Aorta (tissue), 5 donors: ENCODE measurements at regions of chr4 and their contacts with region 1.

Region 1: GRCh38 chr4:8403173-8403753 is 37.3 kb downstream of the ACOX3 start:
- DNase-seq: peak; percentile 91 to 96
- ATAC-seq: peak; percentile 90
- H3K4me3 ChIP-seq: no peak overlapping the region
- H3K27ac ChIP-seq: no peak overlapping the region
- H3K4me1 ChIP-seq: no peaks in the 10 kb centered on the region
- H3K27me3 ChIP-seq: no peaks in the 10 kb centered on the region

Region 2: GRCh38 chr4:8079031-8079885 is 324.0 kb before region 1 on chr4:
- intact Hi-C with region 1: no loop called
- DNase-seq: peak in 1 of 2 donors; percentile 56
- ATAC-seq: no peak
- H3K4me3 ChIP-seq: no peak overlapping the region
- H3K27ac ChIP-seq: no peak overlapping the region
- H3K4me1 ChIP-seq: no peaks in the 10 kb centered on the region
- H3K27me3 ChIP-seq: no peaks in the 10 kb centered on the region

Region 3: DNA sequence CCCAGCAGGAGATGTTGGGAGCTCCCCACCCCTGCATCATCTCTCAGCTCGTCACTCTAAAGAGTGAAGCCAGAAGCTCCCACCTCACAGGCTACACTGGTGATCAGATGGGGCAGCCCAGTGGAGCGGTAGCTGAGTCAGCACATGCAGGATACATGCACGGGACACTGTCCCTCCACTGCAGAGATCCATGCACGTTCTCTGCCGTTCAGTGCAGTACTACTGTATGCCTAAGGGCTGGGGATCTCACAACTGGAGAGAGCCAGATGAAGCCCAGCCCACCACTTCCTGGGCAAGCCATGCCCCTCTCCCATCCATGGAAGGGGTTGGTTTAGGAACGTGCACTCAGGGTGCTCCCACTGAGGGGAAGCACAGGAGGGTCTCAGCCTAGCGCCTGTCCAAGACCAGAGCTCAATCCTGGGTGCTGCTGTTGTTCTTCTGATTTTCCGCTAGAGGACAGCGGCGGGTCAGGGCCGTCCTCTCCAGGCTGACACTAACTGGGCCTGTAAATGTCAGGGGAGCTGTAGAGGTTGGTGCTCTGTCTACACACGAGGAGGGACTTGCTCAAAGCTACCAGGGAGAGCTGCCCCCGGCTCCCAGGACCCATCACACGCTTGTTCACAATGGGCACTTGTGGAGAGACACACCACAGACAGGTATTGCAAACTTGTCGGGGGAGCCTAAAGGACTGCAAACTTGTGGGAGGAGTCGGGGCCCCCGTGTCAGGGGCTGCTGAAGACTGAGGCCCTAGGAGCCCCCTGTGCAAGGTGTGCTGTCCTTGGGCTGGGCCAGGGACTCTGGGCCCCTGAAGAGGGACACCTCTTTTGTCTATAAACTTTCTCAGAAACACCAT is 226.5 kb before region 1 on chr4:
- intact Hi-C with region 1: loop called in 1 of 2 experiments (anchors 5 kb)
- DNase-seq: peak in 1 of 2 donors; percentile 71
- ATAC-seq: peak; percentile 74
- H3K4me3 ChIP-seq: no peak overlapping the region
- H3K27ac ChIP-seq: no peak overlapping the region
- H3K4me1 ChIP-seq: no peaks in the 10 kb centered on the region
- H3K27me3 ChIP-seq: no peaks in the 10 kb centered on the region

Region 4: GRCh38 chr4:8241895-8242696 is 161.2 kb before region 1 on chr4:
- intact Hi-C with region 1: loop called (anchors 1 kb)
- DNase-seq: peak; percentile 91 to 96
- ATAC-seq: peak; percentile 93
- H3K4me3 ChIP-seq: no peak overlapping the region
- H3K27ac ChIP-seq: no peak overlapping the region
- H3K4me1 ChIP-seq: no peaks in the 10 kb centered on the region
- H3K27me3 ChIP-seq: no peaks in the 10 kb centered on the region

Region 5: DNA sequence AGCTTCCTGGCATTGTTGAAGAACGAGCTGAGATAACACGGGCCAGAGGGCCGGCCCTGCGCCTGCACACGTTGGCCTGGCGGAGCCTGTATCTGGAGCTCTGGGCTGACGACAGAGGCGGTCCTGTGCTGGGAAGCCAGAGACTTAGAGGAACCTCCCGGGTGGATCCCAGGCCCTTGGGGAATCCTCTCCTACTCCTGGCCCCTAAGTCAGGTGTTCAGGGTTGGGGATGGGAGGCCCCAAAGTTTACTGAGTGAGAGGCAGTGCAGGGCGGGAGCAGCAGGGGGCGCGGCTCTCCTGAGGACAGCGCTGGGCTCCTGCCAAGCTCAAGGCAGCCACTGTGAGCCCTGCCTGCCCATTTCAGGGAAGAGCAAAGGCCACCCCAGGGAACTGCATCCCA is 136.2 kb before region 1 on chr4:
- intact Hi-C with region 1: loop called in 1 of 2 experiments (anchors 2 kb)
- DNase-seq: peak; percentile 76 to 87
- ATAC-seq: peak; percentile 65
- H3K4me3 ChIP-seq: no peak overlapping the region
- H3K27ac ChIP-seq: no peak overlapping the region
- H3K4me1 ChIP-seq: no peaks in the 10 kb centered on the region
- H3K27me3 ChIP-seq: no peaks in the 10 kb centered on the region

Region 6: DNA sequence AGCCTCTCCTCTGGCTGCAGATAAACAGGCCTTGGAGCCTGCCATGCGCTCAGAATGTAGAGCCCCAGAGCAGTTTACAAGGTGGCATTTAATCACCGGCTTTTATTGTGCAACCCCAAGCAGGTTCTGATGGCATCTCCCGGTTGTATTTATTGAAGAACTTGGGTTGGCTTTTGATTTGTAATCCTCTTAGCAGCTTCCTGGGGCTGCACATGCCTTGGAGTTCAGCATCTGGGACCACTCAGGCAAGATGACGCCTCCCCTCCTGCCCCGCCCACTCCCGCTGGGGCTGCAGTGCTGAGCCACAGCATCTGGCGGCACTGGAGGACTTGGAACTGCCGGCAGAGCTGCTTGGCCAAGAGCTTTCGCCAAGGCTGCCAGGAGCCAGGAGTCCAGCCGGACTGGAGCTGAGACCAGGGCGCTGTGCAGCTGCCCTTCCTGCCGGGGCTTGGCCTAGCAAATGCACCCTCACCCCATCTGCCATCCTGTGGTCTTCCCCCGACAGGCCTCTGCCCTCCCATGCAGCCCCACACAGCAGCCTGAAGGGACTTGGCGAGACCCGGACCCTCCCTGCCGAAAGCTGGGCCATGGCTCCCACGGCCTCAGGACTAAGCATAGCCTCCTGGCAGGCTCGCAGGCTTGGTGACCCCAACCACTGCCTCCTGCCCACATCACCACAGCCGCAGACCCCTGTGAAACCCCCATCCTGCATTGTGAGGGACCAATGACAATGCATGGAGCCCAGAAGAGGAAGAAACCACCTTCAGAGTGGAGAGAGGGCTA is 128.3 kb before region 1 on chr4:
- intact Hi-C with region 1: loop called in 1 of 2 experiments (anchors 2 kb)
- DNase-seq: peak; percentile 91 to 95
- ATAC-seq: peak; percentile 76
- H3K4me3 ChIP-seq: no peak overlapping the region
- H3K27ac ChIP-seq: no peak overlapping the region
- H3K4me1 ChIP-seq: no peaks in the 10 kb centered on the region
- H3K27me3 ChIP-seq: no peaks in the 10 kb centered on the region

Region 7: GRCh38 chr4:8383451-8384160 is 19.7 kb before region 1 on chr4:
- intact Hi-C with region 1: no loop called
- DNase-seq: peak in 1 of 2 donors; percentile 41
- ATAC-seq: no peak
- H3K4me3 ChIP-seq: no peak overlapping the region
- H3K27ac ChIP-seq: no peak overlapping the region
- H3K4me1 ChIP-seq: no peaks in the 10 kb centered on the region
- H3K27me3 ChIP-seq: no peaks in the 10 kb centered on the region

Region 8: DNA sequence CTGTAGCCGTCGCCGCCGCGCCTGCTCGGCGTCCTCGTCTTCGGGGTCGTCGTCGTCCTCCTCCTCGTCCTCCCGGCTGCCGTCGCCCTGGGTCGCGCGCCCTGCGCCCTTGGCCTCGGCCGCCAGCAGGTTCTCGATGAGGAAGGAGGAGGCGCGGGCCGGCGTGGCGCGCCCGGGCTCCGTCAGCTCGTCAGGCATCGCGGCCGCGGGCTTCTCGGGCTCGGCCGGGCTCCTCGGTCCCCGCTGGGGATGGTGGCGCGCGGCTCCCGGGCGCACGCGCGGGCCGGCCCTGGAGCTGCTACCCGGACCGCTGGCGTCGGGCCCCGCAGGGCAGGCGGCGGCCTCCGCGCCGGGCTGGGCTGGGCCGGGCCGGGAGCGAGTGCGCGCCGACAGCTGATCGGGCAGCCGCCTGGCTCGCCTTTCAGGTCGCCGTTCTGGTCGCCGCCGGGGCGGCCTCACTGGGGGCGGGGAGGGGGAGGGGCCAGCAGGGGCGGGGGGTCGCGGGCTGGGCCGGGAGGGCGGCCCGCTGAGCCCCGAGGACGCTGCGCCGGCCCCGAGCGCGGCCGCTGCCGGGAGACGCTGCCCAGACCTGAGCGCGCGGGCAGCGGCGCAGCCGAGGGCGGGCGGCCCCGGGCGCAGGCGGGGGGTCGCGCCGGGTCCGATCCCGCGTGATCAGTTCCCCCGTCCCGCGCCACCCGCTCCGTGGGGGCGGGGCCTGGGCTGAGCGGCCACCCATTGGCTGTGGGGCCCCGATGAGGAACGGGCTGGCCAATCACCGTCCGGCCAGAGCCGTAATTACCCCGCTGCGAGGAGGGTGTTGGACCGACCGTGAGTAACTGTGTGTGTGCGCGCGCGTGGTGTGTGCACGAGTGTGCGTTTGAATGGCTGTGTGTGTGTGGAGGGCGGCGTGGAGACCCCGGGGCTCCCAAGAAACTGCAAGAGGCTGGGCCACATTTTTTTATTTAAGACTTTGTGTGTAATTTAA is 468.4 kb after region 1 on chr4 and contains the start of gene HMX1:
- intact Hi-C with region 1: no loop called
- DNase-seq: no peak
- ATAC-seq: peak; percentile 44
- H3K4me3 ChIP-seq: no peak within 1 kb of the TSS
- H3K27ac ChIP-seq: no peak within 1 kb of the TSS
- H3K4me1 ChIP-seq: no peaks in the 10 kb centered on the region
- H3K27me3 ChIP-seq: no peaks in the 10 kb centered on the region
- total RNA-seq, gene HMX1: not detected